HEK293 (cell line): ENCODE measurements at regions of chr6 and their contacts with region 1.

Region 1: GRCh38 chr6:151475653-151476523 is 17.9 kb upstream of the CCDC170 start:
- H3K4me3 ChIP-seq: no peak overlapping the region
- H3K27ac ChIP-seq: no peak overlapping the region
- H3K4me1 ChIP-seq: no peaks in the 10 kb centered on the region
- CTCF ChIP-seq: no peak; the same call in 1 of the 2 replicates

Region 2: GRCh38 chr6:151422981-151423380 is 52.9 kb before region 1 on chr6:
- CTCF ChIA-PET with region 1: no interaction called
- POLR2A ChIA-PET with region 1: no interaction called
- H3K4me3 ChIP-seq: no peak overlapping the region
- H3K27ac ChIP-seq: no peak overlapping the region
- H3K4me1 ChIP-seq: no peaks in the 10 kb centered on the region
- CTCF ChIP-seq: no peak

Region 3: GRCh38 chr6:151461673-151462072 is 14.2 kb before region 1 on chr6:
- CTCF ChIA-PET with region 1: interaction called, 10 read pairs
- POLR2A ChIA-PET with region 1: no interaction called
- H3K4me3 ChIP-seq: no peak overlapping the region
- H3K27ac ChIP-seq: no peak overlapping the region
- H3K4me1 ChIP-seq: no peaks in the 10 kb centered on the region
- CTCF ChIP-seq: no peak

Region 4: DNA sequence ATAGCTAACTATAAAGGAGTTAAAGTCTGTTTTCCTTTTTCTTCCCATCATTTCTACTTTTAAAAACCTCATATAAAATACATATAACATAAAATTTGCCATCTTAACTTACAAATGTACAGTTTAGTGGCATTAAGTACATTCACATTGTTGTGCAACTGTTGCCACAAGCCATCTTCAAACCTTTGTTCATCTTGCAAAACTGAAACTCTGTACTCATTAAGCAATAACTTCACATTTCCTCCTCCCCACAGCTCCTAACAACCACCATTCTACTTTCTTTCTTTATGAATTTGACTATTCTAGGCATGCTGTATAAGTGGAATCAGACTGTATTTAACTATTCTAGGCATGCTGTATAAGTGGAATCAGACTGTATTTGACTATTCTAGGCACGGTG is 22.4 kb after region 1 on chr6:
- CTCF ChIA-PET with region 1: interaction called, 10 read pairs
- POLR2A ChIA-PET with region 1: no interaction called
- H3K4me3 ChIP-seq: no peak overlapping the region
- H3K27ac ChIP-seq: no peak overlapping the region
- H3K4me1 ChIP-seq: no peaks in the 10 kb centered on the region
- CTCF ChIP-seq: no peak